ENCODE measurements at regions of chr3 and their contacts with region 1.

Region 1: DNA sequence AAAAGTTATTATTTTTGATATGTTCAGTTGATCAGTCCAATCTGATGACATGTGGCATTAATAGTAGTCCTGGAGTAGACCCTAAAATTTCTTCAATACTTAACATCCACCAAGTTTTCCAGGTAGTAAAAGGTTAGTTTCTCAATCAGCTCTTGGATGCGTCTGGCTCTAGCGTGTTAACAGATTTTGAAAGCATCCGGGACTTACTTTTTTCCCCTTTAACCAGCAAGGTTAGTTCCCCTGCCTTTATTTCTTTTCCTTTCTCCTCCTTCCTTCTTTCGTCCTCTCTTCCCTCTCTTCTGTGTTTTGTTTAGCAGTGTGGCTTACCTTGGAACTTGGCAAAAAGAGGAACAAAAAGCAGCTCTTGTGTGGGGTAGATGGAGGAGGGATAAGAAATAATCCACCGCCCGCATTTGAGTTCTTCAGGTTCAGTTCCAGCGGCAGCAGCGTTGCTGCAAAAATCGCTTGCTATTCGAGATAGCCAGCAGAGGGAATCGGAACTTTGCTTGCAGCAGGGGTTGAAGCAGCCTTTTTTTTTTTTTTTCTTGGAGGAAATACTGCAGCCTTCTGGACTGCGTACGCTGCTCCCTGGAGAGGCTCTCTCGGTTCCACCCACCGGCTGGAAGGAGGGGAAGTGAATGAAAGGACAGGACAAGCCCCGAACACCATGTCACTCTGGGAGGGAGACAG is at the start of gene RBMS3:
- DNase-seq: peak; percentile 86
- H3K4me3 ChIP-seq: peak within 1 kb of the TSS; percentile 80
- H3K27ac ChIP-seq: peak within 1 kb of the TSS; percentile 94
- H3K4me1 ChIP-seq: peaks cover 50% of the 10 kb centered on the region
- H3K27me3 ChIP-seq: no peaks in the 10 kb centered on the region
- CTCF ChIP-seq: peak; percentile 71
- total RNA-seq, gene RBMS3: 25.3 TPM

Region 2: DNA sequence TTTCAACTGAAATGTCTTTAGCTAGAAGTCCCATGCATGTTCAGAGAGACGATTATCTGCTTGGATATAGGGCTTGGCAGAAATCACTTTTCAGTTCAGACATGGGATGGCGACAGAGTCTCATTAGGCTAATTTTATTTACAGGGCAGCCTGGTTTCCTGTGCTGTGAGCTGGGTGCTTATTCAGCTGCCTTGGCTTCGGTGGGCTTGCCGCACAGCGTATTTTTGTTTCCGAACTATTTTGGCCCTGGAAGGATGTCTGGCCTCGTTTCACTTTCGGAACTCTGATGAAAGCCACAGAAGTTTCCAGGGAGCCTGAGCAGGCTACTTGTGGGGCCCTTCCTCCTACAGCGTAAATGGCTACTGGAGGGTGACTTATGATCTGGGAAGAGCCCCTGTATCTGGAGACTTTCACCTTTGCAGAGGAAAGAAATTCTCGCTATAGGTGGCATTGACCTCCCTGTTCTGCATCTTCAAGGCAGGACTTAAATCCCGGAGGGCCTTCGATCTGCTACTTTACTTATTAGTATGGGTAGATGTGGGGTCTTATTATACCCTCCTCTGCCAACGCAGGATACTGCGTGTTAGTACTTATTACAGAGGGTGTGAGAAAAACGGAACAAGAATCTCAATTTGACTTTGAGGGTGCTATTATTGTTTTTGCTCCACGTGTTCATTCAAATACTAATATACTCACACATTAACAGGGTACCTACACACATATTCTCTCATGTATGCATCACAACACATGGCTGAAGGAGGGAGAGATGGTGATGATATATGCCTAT is 363.6 kb before region 1 on chr3:
- intact Hi-C with region 1: loop called (anchors 10 kb)
- DNase-seq: peak; percentile 54
- H3K4me3 ChIP-seq: peak overlapping the region; percentile 52
- H3K27ac ChIP-seq: peak overlapping the region; percentile 69
- H3K4me1 ChIP-seq: peaks cover 10% of the 10 kb centered on the region
- H3K27me3 ChIP-seq: no peaks in the 10 kb centered on the region
- CTCF ChIP-seq: peak; percentile 79

Region 3: DNA sequence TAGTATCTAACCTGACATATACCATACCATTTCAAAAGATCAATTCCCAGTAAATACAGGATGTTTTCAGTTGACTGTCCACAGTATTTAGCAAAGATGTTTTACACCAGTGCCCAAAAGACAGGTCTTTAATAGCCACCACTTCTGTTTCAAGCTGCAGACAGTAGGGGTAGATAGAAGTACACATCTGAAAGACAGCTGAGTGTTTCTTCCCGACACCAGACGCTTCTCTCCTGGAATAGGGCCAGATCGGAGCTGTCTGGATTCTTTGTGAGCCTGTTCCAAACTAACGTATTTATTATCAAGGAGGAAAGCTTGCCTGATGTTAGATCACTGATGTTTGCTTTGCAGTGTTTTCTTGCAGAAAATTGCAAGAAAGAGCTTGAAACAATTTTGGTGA is 135.7 kb before region 1 on chr3:
- intact Hi-C with region 1: loop called (anchors 10 kb)
- DNase-seq: peak; percentile 20
- H3K4me3 ChIP-seq: no peak overlapping the region
- H3K27ac ChIP-seq: no peak overlapping the region
- H3K4me1 ChIP-seq: peaks cover 19% of the 10 kb centered on the region
- H3K27me3 ChIP-seq: no peaks in the 10 kb centered on the region
- CTCF ChIP-seq: peak; percentile 59

Region 4: GRCh38 chr3:29440413-29441305 is 160.1 kb after region 1 on chr3:
- intact Hi-C with region 1: no loop called
- DNase-seq: no peak
- H3K4me3 ChIP-seq: peak overlapping the region; percentile 56
- H3K27ac ChIP-seq: peak overlapping the region; percentile 45
- H3K4me1 ChIP-seq: peaks cover 20% of the 10 kb centered on the region
- H3K27me3 ChIP-seq: no peaks in the 10 kb centered on the region
- CTCF ChIP-seq: no peak

Region 5: GRCh38 chr3:29515451-29515850 is 234.9 kb after region 1 on chr3:
- intact Hi-C with region 1: loop called (anchors 10 kb)
- DNase-seq: no peak
- H3K4me3 ChIP-seq: no peak overlapping the region
- H3K27ac ChIP-seq: peak overlapping the region; percentile 43
- H3K4me1 ChIP-seq: peaks cover 58% of the 10 kb centered on the region
- H3K27me3 ChIP-seq: no peaks in the 10 kb centered on the region
- CTCF ChIP-seq: no peak

Region 6: GRCh38 chr3:29759411-29760225 is 479.1 kb after region 1 on chr3:
- intact Hi-C with region 1: loop called (anchors 5 kb)
- DNase-seq: no peak
- H3K4me3 ChIP-seq: peak overlapping the region; percentile 32
- H3K27ac ChIP-seq: peak overlapping the region; percentile 81
- H3K4me1 ChIP-seq: peaks cover 65% of the 10 kb centered on the region
- H3K27me3 ChIP-seq: no peaks in the 10 kb centered on the region
- CTCF ChIP-seq: no peak